OCI-LY7 (cell line): ENCODE measurements at regions of chr5 and their contacts with region 1.

Region 1: GRCh38 chr5:36695677-36696673 is 89.6 kb downstream of the SLC1A3 start:
- DNase-seq: peak; percentile 60
- H3K4me3 ChIP-seq: no peak overlapping the region
- H3K27ac ChIP-seq: no peak overlapping the region
- H3K4me1 ChIP-seq: peaks cover 4% of the 10 kb centered on the region
- CTCF ChIP-seq: peak; percentile 83

Region 2: GRCh38 chr5:36414869-36415282 is 281.1 kb before region 1 on chr5:
- CTCF ChIA-PET with region 1: no interaction called
- POLR2A ChIA-PET with region 1: no interaction called
- intact Hi-C with region 1: loop called (anchors 5 kb)
- DNase-seq: peak; percentile 45
- H3K4me3 ChIP-seq: no peak overlapping the region
- H3K27ac ChIP-seq: no peak overlapping the region
- H3K4me1 ChIP-seq: no peaks in the 10 kb centered on the region
- CTCF ChIP-seq: peak; percentile 86